Activated CD4-positive, alpha-beta T cell treated with anti-CD3 and anti-CD28 coated beads for 36 hours (primary cell): ENCODE measurements at regions of chr11 and their contacts with region 1.

Region 1: DNA sequence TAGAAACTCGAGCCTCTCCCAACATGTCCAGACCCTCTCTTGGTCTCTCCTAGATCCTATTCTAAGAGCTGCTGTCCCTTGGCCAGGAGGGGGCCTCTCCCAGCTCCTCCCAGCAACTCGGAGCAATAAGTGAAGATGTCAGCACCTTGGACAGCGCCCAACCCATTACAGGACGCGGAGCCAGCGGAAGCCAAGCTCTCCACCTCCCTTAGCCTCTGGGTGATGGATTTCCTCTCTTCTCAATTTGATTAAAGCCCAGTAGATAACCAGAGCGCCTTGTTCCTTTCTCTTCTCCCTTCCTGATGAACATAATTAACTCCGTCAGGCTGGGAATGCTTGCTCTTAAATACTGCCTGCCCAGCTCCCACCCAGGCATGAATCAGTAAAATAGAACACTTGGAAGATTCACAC is 26.2 kb upstream of the TPBGL start:
- DNase-seq: peak; percentile 90
- ATAC-seq: peak; percentile 71
- H3K4me3 Mint-ChIP-seq: no peak overlapping the region
- H3K27ac Mint-ChIP-seq: no peak overlapping the region
- H3K4me1 Mint-ChIP-seq: no peaks in the 10 kb centered on the region
- H3K27me3 Mint-ChIP-seq: peaks cover 28% of the 10 kb centered on the region

Region 2: DNA sequence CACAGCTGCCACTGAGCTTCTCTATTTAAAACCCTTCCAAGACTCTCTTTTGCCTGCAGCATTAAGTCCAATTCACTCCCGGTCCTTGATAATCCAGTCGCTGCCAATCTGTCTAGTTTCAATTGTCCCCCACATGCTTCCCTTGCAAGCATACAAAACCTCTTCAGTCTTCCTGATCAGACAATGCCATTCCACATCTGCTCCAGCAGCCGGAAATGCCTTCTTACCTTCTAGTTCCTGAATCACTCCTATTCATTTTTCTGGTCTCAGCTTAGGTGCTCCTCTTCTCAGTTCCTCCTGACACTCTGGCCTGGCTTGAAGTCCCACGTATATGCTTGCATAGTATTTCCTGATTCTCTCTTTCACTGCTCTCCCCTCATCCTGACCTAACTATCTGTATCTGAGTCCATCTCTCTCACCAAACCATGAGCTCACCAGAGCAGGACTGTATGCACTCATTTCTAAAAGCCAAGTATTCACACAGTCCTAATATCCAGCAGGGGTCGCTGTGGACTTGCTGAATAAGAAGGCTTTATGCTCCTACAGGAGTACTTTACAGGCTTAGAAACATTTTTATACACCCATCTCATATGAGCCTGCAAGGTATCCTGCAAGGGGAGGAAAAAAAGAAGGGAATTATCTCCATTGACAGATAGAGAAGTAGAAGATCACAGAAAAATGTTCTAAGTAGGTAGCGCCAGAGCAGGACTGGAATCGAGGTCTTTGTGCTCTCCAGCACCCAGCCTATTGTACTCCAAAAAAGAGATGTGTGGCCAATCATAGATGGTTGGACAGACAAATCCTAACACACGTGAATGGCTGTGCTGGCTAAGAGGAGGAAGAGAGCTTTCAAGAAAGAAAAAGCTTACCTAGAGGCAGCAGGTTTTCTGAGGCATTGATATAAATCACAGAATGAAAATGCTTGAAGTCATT is 284.7 kb before region 1 on chr11:
- CTCF ChIA-PET with region 1: no interaction called
- POLR2A ChIA-PET with region 1: no interaction called
- intact Hi-C with region 1: no loop called
- DNase-seq: peak; percentile 80
- ATAC-seq: peak; percentile 74
- H3K4me3 Mint-ChIP-seq: no peak overlapping the region
- H3K27ac Mint-ChIP-seq: no peak overlapping the region
- H3K4me1 Mint-ChIP-seq: peaks cover 11% of the 10 kb centered on the region
- H3K27me3 Mint-ChIP-seq: no peaks in the 10 kb centered on the region

Region 3: GRCh38 chr11:75233742-75234172 is 19.3 kb after region 1 on chr11:
- CTCF ChIA-PET with region 1: interaction called, 3 read pairs
- POLR2A ChIA-PET with region 1: no interaction called
- intact Hi-C with region 1: loop called in 1 of 2 experiments (anchors 1 kb)
- DNase-seq: peak; percentile 38
- ATAC-seq: no peak
- H3K4me3 Mint-ChIP-seq: no peak overlapping the region
- H3K27ac Mint-ChIP-seq: no peak overlapping the region
- H3K4me1 Mint-ChIP-seq: no peaks in the 10 kb centered on the region
- H3K27me3 Mint-ChIP-seq: peaks cover 9% of the 10 kb centered on the region

Region 4: GRCh38 chr11:75406338-75406777 is 191.9 kb after region 1 on chr11:
- CTCF ChIA-PET with region 1: no interaction called
- POLR2A ChIA-PET with region 1: no interaction called
- intact Hi-C with region 1: no loop called
- DNase-seq: no peak
- ATAC-seq: peak; percentile 28
- H3K4me3 Mint-ChIP-seq: no peak overlapping the region
- H3K27ac Mint-ChIP-seq: no peak overlapping the region
- H3K4me1 Mint-ChIP-seq: peaks cover 45% of the 10 kb centered on the region
- H3K27me3 Mint-ChIP-seq: no peaks in the 10 kb centered on the region